ENCODE measurements at regions of chr5 and their contacts with region 1.

Region 1: GRCh38 chr5:124583469-124584350 is 162.7 kb downstream of the ZNF608 start:
- DNase-seq: peak; percentile 13
- H3K4me3 Mint-ChIP-seq: no peak overlapping the region
- H3K27ac Mint-ChIP-seq: no peak overlapping the region
- H3K4me1 Mint-ChIP-seq: peaks cover 16% of the 10 kb centered on the region
- H3K27me3 Mint-ChIP-seq: peaks cover 7% of the 10 kb centered on the region

Region 2: GRCh38 chr5:124341066-124341858 is 242.4 kb before region 1 on chr5:
- intact Hi-C with region 1: loop called (anchors 2 kb)
- DNase-seq: no peak
- H3K4me3 Mint-ChIP-seq: no peak overlapping the region
- H3K27ac Mint-ChIP-seq: no peak overlapping the region
- H3K4me1 Mint-ChIP-seq: peaks cover 3% of the 10 kb centered on the region
- H3K27me3 Mint-ChIP-seq: no peaks in the 10 kb centered on the region

Region 3: GRCh38 chr5:124410539-124411488 is 172.9 kb before region 1 on chr5:
- intact Hi-C with region 1: no loop called
- DNase-seq: no peak
- H3K4me3 Mint-ChIP-seq: no peak overlapping the region
- H3K27ac Mint-ChIP-seq: no peak overlapping the region
- H3K4me1 Mint-ChIP-seq: no peaks in the 10 kb centered on the region
- H3K27me3 Mint-ChIP-seq: no peaks in the 10 kb centered on the region

Region 4: DNA sequence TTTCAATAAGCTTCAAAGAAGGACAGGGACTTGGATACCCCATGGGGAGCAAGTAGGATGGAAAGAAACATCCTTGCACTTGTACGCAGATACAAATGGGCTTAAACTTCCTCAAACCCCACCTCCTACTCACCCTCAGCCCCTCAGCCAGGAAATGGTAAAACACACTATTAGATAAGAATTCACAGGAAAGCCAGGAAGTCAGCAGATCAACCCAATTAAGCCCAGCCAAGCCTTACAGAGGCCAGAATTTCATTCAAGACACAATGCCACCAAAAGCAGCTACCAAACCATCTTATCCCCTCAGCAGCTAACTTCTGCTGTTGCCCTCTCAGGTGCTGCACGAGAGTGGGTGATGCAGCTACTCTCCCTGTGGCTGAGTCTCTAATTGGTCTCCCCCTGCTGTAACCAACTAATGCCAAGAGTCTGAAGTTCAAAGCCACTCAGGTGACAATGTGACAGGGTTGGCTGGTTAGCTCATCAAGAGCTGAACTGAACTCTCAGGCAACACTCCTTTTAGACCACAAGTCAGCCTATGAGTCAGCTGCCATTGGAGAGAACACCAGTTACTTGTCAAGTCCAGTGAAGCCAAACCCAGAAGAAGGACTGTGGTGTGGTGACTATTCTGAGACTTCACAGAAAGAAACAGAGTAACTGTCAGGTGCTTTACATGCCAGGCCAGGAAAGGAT is 39.2 kb before region 1 on chr5:
- intact Hi-C with region 1: no loop called
- DNase-seq: no peak
- H3K4me3 Mint-ChIP-seq: no peak overlapping the region
- H3K27ac Mint-ChIP-seq: no peak overlapping the region
- H3K4me1 Mint-ChIP-seq: no peaks in the 10 kb centered on the region
- H3K27me3 Mint-ChIP-seq: no peaks in the 10 kb centered on the region

Region 5: DNA sequence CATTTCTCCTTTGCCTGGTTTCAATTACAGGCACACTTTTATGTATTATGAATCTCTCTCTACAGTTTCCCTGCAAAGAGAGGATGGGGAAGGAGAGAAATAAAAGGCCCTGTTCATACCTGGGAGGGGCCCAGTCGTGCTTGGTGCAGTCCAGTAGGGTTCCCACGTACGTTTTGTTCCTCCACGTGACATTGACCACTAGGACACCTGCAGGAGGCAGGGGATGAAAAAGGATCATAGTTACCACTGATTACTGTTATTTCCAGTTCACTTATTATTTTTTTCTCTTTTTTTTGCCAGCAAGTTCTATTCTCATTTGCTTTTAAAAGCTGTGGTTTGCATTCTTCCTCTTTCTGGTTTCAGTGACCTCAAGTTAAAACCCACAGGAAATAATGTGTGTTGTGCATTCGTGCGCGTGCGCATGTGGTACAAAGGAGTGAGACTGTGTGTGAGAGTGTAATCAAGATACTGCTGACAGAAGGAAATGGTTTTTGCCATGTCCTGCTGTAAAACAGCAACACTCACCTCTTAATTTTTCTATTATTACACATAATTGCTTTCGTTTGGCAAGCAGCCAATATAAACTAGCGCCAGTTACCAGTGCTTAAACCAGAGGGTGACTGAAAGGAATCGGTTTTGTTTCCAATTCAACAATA is 65.9 kb after region 1 on chr5:
- intact Hi-C with region 1: loop called (anchors 1 kb)
- DNase-seq: peak; percentile 79
- H3K4me3 Mint-ChIP-seq: no peak overlapping the region
- H3K27ac Mint-ChIP-seq: peak overlapping the region; percentile 58
- H3K4me1 Mint-ChIP-seq: peaks cover 19% of the 10 kb centered on the region
- H3K27me3 Mint-ChIP-seq: peaks cover 40% of the 10 kb centered on the region

Measured in activated T-helper 2 cell treated with anti-CD3 and anti-CD28 coated beads, Interferon-gamma antibody, Interleukin-2, Interleukin-4, amounts not matched to agents 10 μg/mL and 5 μg/mL and 100 μg/mL, durations not matched to agents 14 hours and 24 hours and 36 hours (primary cell).